Activated CD4-positive, alpha-beta memory T cell treated with anti-CD3 and anti-CD28 coated beads, Interleukin-2, amount 10 ng/mL, durations not matched to agents 7 days and 5 days (primary cell): ENCODE measurements at regions of chr6 and their contacts with region 1.

Region 1: DNA sequence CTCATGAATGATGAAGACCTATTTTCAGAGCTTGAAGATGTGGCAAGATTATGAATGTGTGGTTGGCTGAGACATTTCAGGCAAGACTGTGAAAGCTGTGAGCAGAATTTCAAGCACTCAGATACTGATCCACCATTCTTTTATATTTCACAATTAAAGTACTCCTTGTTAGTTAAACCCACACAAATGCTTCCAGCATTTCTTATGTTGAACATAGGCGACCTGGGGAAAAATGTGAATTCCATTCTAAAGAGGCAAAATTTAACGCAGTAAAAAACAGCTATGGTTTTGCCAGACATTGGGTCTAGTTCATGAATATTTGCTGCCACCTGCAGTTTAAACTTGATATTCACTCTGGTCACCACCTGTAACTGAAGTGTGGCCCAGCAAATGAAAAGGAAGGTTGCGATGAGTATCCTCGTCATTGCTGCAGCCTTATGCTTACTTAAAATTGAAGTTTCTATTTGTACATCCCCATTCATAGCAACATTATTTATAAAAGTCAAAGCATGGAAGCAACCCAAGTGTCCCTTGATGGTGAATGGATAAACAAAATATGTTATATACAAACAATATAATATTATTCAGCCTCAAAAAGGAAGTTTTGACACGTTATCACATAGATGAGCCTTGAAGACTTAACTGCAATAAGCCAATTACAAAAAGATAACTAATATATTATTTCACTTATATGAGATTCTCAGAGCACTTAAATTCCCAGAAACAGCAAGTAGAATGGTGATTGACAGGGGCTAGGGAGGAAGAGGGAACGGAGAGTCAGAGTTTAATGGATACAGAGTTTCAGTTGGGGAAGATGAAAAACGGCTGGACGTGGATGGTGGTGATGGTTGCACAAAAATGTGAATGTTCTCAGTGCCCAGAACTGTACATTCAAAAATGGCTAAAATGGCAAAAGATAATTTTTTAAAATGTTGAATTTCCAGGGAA is 32.4 kb upstream of the FAM184A start:
- DNase-seq: peak; percentile 32
- H3K4me3 Mint-ChIP-seq: no peak overlapping the region
- H3K27ac Mint-ChIP-seq: no peak overlapping the region
- H3K4me1 Mint-ChIP-seq: peaks cover 14% of the 10 kb centered on the region
- H3K27me3 Mint-ChIP-seq: peaks cover 12% of the 10 kb centered on the region

Region 2: DNA sequence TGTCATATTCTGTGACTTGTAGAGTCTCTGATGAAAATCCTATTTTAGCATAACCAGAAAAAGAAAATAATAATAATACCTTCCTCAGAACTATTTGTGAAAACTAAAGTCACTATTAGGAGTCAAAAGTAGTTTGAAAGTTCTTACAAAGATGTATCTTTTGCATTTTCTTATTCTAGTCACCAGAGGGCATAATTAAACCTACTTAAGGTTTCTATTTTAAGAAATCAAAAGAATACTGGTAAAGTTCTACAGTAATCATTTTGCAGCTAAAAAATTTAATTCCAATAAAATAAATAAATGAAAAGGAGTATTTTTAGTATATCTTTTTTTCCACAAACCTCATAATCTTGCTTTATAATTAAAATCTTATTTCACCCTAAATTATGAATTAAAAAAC is 147.9 kb before region 1 on chr6:
- CTCF ChIA-PET with region 1: interaction called, 66 read pairs
- POLR2A ChIA-PET with region 1: no interaction called
- DNase-seq: no peak
- H3K4me3 Mint-ChIP-seq: no peak overlapping the region
- H3K27ac Mint-ChIP-seq: no peak overlapping the region
- H3K4me1 Mint-ChIP-seq: peaks cover 11% of the 10 kb centered on the region
- H3K27me3 Mint-ChIP-seq: no peaks in the 10 kb centered on the region

Region 3: DNA sequence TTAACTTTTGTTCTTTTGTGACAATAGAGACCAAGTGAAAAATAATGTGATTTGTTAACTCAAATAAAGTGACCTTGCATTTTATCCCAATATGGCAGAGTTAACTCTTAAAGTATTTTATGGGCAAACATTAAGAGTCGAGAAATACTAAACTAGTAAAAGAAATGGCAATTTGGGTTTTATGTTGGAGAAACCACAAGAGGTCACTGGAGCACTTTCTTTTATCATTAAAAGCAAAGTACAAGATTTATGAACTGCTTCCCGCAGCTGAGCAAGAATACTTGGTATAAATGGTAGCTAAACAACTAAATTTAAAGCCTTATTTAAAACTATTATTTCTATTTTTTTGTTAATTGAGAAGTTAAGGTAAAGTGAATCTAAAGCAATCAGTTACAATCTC is 142.5 kb before region 1 on chr6:
- CTCF ChIA-PET with region 1: interaction called, 66 read pairs
- POLR2A ChIA-PET with region 1: no interaction called
- DNase-seq: no peak
- H3K4me3 Mint-ChIP-seq: no peak overlapping the region
- H3K27ac Mint-ChIP-seq: no peak overlapping the region
- H3K4me1 Mint-ChIP-seq: no peaks in the 10 kb centered on the region
- H3K27me3 Mint-ChIP-seq: no peaks in the 10 kb centered on the region

Region 4: DNA sequence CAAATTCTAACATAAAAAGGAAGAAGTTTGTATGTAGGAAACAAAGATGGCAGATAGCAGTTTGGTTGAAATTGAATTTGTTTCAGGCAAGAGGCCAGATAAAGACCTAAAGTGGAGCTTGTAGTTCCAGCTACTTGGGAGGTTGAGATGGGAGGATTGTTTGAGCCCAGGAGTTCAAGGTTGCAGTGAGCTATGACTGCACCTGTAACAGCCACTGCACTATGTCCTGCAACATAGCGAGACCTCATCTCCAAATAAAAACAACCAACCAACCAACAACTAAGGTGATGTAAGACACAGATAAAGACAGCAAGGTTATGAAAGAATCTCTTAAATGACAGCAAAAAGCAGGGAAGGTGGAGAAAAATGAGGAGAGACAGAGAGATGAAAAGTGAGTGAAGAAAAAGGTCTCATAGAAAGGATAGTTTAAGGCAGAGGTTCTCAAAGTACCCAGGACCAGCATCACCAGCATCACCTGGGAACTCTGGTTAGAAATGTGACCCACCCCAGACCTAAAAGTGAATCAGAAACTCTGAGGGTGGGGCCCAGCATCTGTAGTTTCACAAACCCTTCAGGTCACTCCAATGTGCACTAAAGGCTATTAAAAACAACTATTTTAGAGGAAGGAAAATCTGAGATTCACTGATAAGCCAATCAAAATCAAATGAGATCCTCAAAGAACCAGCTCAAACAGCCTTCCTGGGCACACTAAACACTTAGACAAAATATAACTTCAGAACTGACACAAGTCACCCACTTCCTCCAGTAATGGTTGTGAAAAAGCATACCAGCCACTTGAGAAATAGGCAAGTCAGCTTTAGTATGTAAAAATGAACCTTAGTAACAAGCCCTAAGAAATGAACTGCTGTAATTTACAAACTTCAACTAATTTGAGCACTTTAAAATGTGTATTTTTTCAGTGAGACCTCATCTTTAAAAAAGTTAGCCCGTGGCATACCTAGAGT is 90.0 kb before region 1 on chr6:
- CTCF ChIA-PET with region 1: no interaction called
- POLR2A ChIA-PET with region 1: no interaction called
- DNase-seq: no peak
- H3K4me3 Mint-ChIP-seq: no peak overlapping the region
- H3K27ac Mint-ChIP-seq: peak overlapping the region; percentile 17
- H3K4me1 Mint-ChIP-seq: peaks cover 10% of the 10 kb centered on the region
- H3K27me3 Mint-ChIP-seq: no peaks in the 10 kb centered on the region

Region 5: DNA sequence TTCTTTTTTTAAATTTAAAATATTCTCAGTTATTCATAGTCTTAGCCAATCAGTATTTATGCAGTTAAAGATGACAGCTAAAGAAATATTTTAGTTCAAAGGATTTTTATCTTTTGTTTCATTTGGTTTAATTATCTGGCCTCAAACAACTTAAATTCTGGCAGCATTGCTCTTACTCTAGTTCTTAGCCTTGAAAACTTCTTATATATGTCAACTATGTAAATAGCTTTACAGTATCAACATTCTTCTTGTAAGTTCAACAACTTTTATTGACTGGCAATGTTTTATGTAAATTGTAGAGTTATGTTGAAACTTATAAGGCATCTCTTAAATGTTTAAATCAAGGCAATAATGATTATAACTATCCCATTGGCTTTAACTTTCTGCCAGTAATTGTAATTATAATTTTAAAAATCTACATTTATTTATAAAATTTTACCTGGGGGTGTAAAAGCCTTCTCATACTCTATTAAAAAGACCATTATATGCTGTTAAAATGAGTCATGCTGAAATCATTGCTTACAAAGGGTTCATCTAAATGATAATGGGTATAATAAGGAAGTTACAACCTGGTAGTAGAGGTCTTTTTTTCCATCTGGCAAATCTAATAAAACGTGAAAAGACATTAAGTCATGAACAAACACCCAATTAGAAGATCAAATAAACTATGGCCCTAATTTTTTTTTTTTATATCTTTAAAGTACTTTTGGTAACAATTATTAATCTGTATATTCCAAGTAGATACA is 13.4 kb after region 1 on chr6:
- CTCF ChIA-PET with region 1: interaction called, 11 read pairs
- POLR2A ChIA-PET with region 1: no interaction called
- DNase-seq: no peak
- H3K4me3 Mint-ChIP-seq: no peak overlapping the region
- H3K27ac Mint-ChIP-seq: no peak overlapping the region
- H3K4me1 Mint-ChIP-seq: peaks cover 3% of the 10 kb centered on the region
- H3K27me3 Mint-ChIP-seq: peaks cover 4% of the 10 kb centered on the region

Region 6: DNA sequence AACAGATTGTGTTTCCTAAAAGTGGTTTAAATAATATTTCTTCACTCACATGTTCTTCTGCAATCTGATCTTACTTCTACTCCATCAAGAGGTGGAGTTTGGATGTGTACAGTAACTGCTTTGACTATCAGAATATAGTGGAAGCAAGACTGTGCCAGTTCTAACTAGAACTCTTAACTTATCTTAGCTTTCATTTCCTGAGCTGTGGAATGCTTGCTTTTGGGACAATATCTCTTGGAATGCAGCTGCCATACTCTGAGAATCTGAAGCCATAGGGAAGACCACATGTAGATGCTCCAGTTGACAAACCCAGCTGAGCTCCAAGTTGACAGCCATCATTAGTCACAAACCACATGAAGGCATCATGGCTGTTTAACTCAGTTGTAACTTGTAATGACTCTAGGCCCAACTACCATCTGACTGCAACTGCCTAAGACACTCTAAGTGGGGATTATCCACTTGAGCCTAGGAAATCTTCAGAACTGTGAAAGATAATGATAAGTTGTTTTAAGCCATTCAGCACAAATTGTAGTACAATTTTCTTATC is 279.4 kb after region 1 on chr6:
- CTCF ChIA-PET with region 1: no interaction called
- POLR2A ChIA-PET with region 1: no interaction called
- DNase-seq: no peak
- H3K4me3 Mint-ChIP-seq: no peak overlapping the region
- H3K27ac Mint-ChIP-seq: no peak overlapping the region
- H3K4me1 Mint-ChIP-seq: no peaks in the 10 kb centered on the region
- H3K27me3 Mint-ChIP-seq: no peaks in the 10 kb centered on the region